Activated CD8-positive, alpha-beta T cell treated with anti-CD3 and anti-CD28 coated beads for 36 hours (primary cell): ENCODE measurements at regions of chr17 and their contacts with region 1.

Region 1: GRCh38 chr17:47949136-47949759 is 7.9 kb downstream of the PNPO start:
- DNase-seq: peak; percentile 89
- ATAC-seq: peak; percentile 64
- H3K4me3 Mint-ChIP-seq: peak overlapping the region; percentile 47
- H3K27ac Mint-ChIP-seq: peak overlapping the region; percentile 78
- H3K4me1 Mint-ChIP-seq: peaks cover 50% of the 10 kb centered on the region
- H3K27me3 Mint-ChIP-seq: no peaks in the 10 kb centered on the region
- CTCF ChIP-seq: peak; percentile 95

Region 2: GRCh38 chr17:47935961-47936360 is 13.3 kb before region 1 on chr17:
- CTCF ChIA-PET with region 1: interaction called, 83 read pairs
- POLR2A ChIA-PET with region 1: interaction called, 8 read pairs
- intact Hi-C with region 1: no loop called
- DNase-seq: no peak
- ATAC-seq: no peak
- H3K4me3 Mint-ChIP-seq: no peak overlapping the region
- H3K27ac Mint-ChIP-seq: no peak overlapping the region
- H3K4me1 Mint-ChIP-seq: peaks cover 13% of the 10 kb centered on the region
- H3K27me3 Mint-ChIP-seq: no peaks in the 10 kb centered on the region
- CTCF ChIP-seq: no peak

Region 3: GRCh38 chr17:47978324-47978723 is 29.1 kb after region 1 on chr17:
- CTCF ChIA-PET with region 1: interaction called, 284 read pairs
- POLR2A ChIA-PET with region 1: interaction called, 3 read pairs
- intact Hi-C with region 1: no loop called
- DNase-seq: peak; percentile 68
- ATAC-seq: peak; percentile 84
- H3K4me3 Mint-ChIP-seq: no peak overlapping the region
- H3K27ac Mint-ChIP-seq: no peak overlapping the region
- H3K4me1 Mint-ChIP-seq: no peaks in the 10 kb centered on the region
- H3K27me3 Mint-ChIP-seq: no peaks in the 10 kb centered on the region
- CTCF ChIP-seq: peak; percentile 61

Region 4: GRCh38 chr17:47999582-47999981 is 50.3 kb after region 1 on chr17:
- CTCF ChIA-PET with region 1: interaction called, 17 read pairs
- POLR2A ChIA-PET with region 1: no interaction called
- intact Hi-C with region 1: no loop called
- DNase-seq: peak; percentile 26
- ATAC-seq: peak; percentile 80
- H3K4me3 Mint-ChIP-seq: no peak overlapping the region
- H3K27ac Mint-ChIP-seq: no peak overlapping the region
- H3K4me1 Mint-ChIP-seq: peaks cover 2% of the 10 kb centered on the region
- H3K27me3 Mint-ChIP-seq: peaks cover 8% of the 10 kb centered on the region
- CTCF ChIP-seq: no peak